ENCODE measurements at regions of chr7 and their contacts with region 1.

Region 1: DNA sequence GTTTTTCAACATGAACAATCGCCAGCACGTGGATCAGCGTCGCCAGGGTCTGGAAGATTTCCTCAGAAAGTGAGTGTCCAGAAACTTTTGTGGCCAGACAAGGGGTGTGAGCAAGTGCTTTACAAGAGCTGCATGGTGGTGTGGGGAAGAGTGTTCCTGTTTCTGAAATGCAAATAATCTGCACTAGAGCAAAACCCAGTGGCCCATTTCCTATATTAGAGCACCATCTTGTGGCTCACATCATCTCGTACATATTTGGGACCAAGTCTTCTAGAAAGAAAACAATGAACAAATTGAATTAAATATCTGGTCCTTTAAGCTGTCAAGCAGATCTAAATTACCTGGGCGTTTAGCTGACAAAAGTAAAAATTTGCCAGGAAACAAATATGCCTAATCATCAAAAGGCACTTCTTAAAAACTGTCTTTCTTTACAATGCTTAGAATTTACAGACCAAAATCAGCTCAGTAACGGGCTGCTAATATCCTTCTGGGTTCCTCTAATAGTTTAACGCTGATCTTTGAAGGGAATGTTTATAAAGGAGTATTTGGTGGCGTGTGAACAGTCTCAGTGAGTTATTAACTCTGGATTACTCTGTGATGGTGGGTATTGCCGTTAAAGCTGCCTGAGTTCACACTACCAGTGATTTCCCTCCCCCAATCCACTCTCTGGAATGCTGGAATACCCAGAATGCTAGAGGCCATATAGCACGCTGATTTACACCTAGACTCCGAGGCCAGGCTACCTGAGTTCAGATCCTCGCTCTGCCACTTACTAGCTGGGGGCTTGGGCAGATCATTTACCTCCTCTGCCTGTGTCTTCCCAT is 73.6 kb downstream of the SNX10 start:
- DNase-seq: peak; percentile 88
- H3K4me3 ChIP-seq: no peak overlapping the region
- H3K27ac ChIP-seq: no peak overlapping the region
- H3K4me1 ChIP-seq: peaks cover 15% of the 10 kb centered on the region
- H3K27me3 ChIP-seq: peaks cover 0 to 8% of the 10 kb centered on the region in 2 experiments
- CTCF ChIP-seq: peak; percentile 56 to 60
- POLR2A ChIP-seq: no peak

Region 2: DNA sequence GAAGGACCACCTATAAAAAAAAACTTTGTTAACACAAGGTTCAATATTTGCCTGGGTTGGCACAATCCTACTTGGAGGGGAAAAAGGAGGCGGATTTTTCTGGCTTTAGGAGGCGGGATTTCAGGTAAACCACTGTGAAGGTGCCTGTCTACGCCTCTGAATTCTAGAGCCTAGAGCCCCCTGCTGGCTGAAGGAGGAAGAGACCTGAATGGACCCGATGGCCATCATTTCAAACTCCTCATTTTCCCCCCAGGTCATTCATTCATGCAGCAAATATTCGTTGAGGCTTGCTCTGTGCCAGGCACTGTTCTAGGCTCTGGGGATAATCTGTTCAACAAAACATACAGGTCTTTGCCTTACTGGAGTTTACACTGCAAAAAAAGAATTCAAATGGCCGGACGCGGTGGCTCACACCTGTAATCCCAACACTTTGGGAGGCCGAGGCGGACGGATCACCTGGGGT is 303.6 kb before region 1 on chr7:
- CTCF ChIA-PET with region 1: interaction called, 10 read pairs
- POLR2A ChIA-PET with region 1: no interaction called
- dilution Hi-C with region 1: no loop called
- intact Hi-C with region 1: no loop called
- DNase-seq: peak; percentile 49
- H3K4me3 ChIP-seq: no peak overlapping the region
- H3K27ac ChIP-seq: no peak overlapping the region
- H3K4me1 ChIP-seq: no peaks in the 10 kb centered on the region
- H3K27me3 ChIP-seq: peaks cover 8 to 11% of the 10 kb centered on the region in 2 experiments
- CTCF ChIP-seq: peak; percentile 78 to 86
- POLR2A ChIP-seq: no peak

Region 3: DNA sequence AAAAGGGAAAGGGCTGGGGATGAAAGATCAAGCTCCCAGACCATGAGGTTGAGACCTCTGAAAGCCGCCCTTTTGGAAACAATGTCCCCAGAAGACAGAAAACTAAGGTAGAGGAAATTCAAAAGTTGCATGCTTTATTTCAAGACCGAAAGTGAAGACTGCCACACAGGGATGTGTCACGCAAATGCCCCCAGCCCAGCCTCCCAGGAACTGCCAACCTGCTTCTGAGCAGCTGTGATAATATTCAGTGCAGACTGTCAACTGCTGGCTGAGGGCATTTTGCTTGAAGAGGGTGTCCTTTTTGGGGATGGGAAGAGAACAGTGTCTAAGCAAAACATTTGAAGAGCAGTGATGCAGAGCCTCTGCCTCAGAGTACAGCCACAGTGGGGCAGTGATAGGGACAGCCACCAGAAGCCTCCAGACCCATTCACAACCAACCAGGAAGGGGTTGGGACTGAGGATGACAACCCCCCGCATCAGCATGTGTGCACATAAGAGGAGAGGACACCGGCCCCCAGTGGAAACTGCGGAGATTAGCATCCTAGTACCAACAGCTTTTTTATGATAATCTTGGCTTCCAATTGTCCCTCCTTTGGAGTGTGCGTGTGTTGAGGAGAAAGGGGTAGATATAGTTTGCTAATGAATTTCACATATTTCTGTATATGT is 248.0 kb before region 1 on chr7:
- CTCF ChIA-PET with region 1: no interaction called
- POLR2A ChIA-PET with region 1: no interaction called
- dilution Hi-C with region 1: no loop called
- intact Hi-C with region 1: no loop called
- DNase-seq: no peak
- H3K4me3 ChIP-seq: no peak overlapping the region
- H3K27ac ChIP-seq: no peak overlapping the region
- H3K4me1 ChIP-seq: no peaks in the 10 kb centered on the region
- H3K27me3 ChIP-seq: peaks cover 9 to 19% of the 10 kb centered on the region in 2 experiments
- CTCF ChIP-seq: no peak
- POLR2A ChIP-seq: no peak

Region 4: GRCh38 chr7:26200444-26201246 is 164.6 kb before region 1 on chr7 and contains the start of gene HNRNPA2B1:
- CTCF ChIA-PET with region 1: interaction called, 14 read pairs
- POLR2A ChIA-PET with region 1: interaction called, 8 read pairs
- dilution Hi-C with region 1: no loop called
- intact Hi-C with region 1: loop called (anchors 2 kb)
- DNase-seq: peak; percentile 99
- H3K4me3 ChIP-seq: peak within 1 kb of the TSS; percentile 98 to 100 (median 98)
- H3K27ac ChIP-seq: peak within 1 kb of the TSS; percentile 97
- H3K4me1 ChIP-seq: peaks cover 40% of the 10 kb centered on the region
- H3K27me3 ChIP-seq: no peaks in the 10 kb centered on the region
- CTCF ChIP-seq: no peak
- POLR2A ChIP-seq: peak; percentile 100
- total RNA-seq, gene HNRNPA2B1: 703 and 717 TPM in 2 replicates

Region 5: GRCh38 chr7:26381476-26382353 is 16.4 kb after region 1 on chr7:
- CTCF ChIA-PET with region 1: interaction called, 16 read pairs
- POLR2A ChIA-PET with region 1: no interaction called
- dilution Hi-C with region 1: no loop called
- intact Hi-C with region 1: no loop called
- DNase-seq: no peak
- H3K4me3 ChIP-seq: no peak overlapping the region
- H3K27ac ChIP-seq: no peak overlapping the region
- H3K4me1 ChIP-seq: peaks cover 4% of the 10 kb centered on the region
- H3K27me3 ChIP-seq: peaks cover 3 to 5% of the 10 kb centered on the region in 2 experiments
- CTCF ChIP-seq: no peak
- POLR2A ChIP-seq: no peak

Region 6: DNA sequence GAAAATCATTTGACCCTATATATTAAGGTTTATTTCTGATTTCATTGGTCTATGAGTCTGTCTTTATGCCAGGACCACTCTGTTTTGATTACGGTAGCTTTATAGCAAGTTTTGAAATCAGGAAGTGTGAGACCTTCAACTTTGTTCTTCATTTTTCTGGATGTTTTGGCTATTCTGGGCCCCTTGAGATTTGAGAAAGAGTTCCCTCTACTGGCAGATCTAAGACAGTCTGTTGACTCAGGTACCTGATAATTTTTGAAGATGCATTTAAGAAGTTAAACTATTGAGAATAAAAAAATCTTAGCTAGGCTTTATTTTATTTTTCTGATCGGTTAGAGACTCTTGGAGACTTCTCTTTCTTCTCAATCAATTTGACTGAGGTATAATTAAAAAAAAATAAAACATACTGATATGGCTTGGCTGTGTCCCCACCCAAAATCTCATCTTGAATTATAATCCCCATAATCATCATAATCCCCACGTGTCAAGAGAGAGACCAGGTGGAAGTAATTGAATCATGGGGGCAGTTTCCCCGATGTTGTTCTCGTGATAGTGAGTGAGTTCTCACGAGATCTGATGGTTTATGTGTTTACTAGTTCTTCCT is 135.6 kb after region 1 on chr7:
- CTCF ChIA-PET with region 1: interaction called, 54 read pairs
- POLR2A ChIA-PET with region 1: no interaction called
- dilution Hi-C with region 1: no loop called
- intact Hi-C with region 1: loop called (anchors 1 kb)
- DNase-seq: peak; percentile 52
- H3K4me3 ChIP-seq: no peak overlapping the region
- H3K27ac ChIP-seq: no peak overlapping the region
- H3K4me1 ChIP-seq: no peaks in the 10 kb centered on the region
- H3K27me3 ChIP-seq: peaks cover 2 to 3% of the 10 kb centered on the region in 2 experiments
- CTCF ChIP-seq: peak; percentile 25 to 29
- POLR2A ChIP-seq: no peak

Region 7: GRCh38 chr7:26675143-26675887 is 310.0 kb after region 1 on chr7:
- CTCF ChIA-PET with region 1: interaction called, 345 read pairs
- POLR2A ChIA-PET with region 1: no interaction called
- dilution Hi-C with region 1: no loop called
- intact Hi-C with region 1: no loop called
- DNase-seq: peak; percentile 46
- H3K4me3 ChIP-seq: no peak overlapping the region
- H3K27ac ChIP-seq: no peak overlapping the region
- H3K4me1 ChIP-seq: peaks cover 11% of the 10 kb centered on the region
- H3K27me3 ChIP-seq: no peaks in the 10 kb centered on the region
- CTCF ChIP-seq: no peak
- POLR2A ChIP-seq: no peak

Region 8: GRCh38 chr7:27160546-27161213 is 795.4 kb after region 1 on chr7:
- CTCF ChIA-PET with region 1: interaction called, 145 read pairs
- POLR2A ChIA-PET with region 1: interaction called, 3 read pairs
- dilution Hi-C with region 1: loop called (anchors 10 kb)
- intact Hi-C with region 1: loop called (anchors 1 kb)
- DNase-seq: peak; percentile 92
- H3K4me3 ChIP-seq: peak overlapping the region in 2 of 3 experiments; percentile 44 to 63
- H3K27ac ChIP-seq: peak overlapping the region; percentile 69
- H3K4me1 ChIP-seq: peaks cover 42% of the 10 kb centered on the region
- H3K27me3 ChIP-seq: no peaks in the 10 kb centered on the region
- CTCF ChIP-seq: peak; percentile 95
- POLR2A ChIP-seq: no peak

Measured in endothelial cell of umbilical vein (primary cell).